HEK293T (cell line): ENCODE measurements at regions of chr3 and their contacts with region 1.

Region 1: DNA sequence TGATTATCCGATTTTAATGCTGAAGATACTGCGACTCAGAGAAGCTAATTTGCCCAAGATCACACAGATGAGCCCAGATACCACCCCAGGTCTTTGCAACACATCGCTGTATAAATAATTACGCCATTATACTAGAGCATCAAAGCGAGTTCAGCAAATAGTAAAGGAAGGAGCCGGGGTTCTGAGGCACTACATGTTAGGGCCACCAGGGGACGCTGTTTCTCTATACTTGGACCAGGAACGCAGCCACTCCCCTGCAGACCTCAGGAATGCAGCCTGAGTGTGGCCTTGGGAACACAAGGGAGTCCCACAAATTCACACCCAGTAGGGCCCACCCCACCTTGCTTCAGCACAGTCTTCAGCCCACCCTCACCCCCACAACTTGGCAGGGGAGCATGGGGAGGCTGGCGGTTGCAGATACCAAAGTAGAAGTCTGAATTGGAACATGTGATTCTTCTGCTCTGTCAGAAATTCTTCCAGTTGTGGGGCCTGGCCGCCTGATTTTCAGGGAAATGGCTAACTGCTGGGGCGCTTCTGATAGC is 57.8 kb upstream of the RYK start:
- DNase-seq: peak; percentile 79

Region 2: GRCh38 chr3:134279471-134279870 is 28.9 kb before region 1 on chr3:
- CTCF ChIA-PET with region 1: no interaction called
- POLR2A ChIA-PET with region 1: no interaction called
- DNase-seq: no peak

Region 3: DNA sequence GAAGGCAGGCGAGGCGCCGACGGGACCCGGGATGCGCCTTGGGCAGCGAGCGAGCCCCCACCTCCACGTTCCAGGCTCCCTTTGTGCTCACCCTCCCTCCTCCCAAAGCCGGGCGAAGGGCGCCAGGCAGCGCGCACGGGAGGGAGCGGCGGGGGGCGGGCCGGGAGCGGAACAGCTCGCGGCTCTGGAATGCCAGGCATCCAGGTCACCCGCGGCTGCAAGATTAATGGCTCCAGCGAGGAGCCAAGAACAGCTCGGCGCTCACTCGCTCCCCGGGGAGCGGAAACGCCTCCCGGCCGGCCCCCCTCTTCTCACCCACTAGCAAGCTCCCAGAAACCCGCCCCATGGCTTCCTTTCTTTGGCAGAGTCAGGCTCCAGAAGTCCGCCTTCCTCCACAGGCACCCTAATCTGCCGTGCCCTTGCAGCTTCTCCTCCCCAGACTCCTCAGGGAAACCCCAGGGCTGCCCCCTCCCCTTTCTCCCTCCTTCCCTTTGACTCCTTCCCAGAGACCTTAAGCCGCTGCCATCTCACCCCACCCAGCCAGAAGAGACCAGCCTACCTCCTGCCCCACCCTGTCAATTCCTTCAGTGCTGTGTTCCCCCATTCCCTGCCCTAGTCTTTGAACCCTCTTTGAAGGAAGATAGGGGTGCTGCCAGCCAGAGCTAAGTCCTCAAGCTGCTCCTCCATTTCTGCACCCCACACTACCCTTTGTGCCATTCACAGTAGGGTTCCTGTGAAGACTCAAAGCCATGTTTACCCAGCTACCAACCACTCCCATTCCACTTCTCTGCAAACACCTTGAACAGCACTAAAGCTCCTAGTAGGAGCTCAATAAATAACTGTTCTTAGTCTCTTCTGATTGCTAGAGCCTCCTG is 55.9 kb after region 1 on chr3:
- CTCF ChIA-PET with region 1: interaction called, 13 read pairs
- POLR2A ChIA-PET with region 1: no interaction called
- DNase-seq: peak; percentile 69

Region 4: DNA sequence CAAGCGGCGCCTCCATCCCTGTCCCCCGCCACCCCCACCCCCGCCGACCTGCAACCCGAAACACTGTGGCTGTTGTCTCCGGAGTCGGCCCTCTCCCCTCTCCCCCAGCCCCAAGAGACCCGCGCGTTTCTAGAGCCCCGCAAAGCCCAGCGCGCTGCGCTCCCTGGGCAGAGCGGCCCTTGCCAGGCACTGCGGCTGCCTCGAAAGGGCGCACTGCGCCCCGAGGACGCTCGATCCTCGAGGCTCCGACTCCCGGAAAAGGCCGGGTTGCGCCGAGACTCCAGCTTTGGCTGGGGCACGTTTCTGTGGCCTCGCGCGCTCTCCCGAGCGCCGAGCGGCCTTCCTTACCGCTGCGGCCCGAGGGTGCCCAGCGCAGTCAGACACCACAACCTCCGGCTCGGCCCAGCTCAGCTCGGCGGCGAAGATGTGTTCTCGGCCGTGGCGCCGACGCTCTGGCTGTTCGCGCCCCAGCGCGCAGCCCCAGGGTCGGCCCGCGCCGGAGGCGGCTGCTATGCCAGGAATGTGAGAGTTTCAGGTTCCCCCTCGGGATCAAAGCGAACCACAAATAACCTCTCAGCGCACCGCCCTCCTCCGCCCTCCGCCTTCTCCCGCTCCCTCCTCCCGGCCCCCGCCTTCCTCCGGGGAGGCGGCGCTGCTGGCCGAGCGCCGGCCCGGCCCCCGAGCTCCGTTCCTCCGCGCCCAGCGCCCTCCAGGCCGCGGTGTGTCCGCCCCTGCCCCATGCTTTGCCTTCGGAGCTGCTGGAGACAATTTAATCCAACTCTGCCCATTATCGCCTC is 65.8 kb after region 1 on chr3 and contains the start of gene AMOTL2:
- CTCF ChIA-PET with region 1: interaction called, 12 read pairs
- POLR2A ChIA-PET with region 1: interaction called, 3 read pairs
- DNase-seq: peak; percentile 91

Region 5: GRCh38 chr3:134473868-134474546 is 165.6 kb after region 1 on chr3:
- CTCF ChIA-PET with region 1: interaction called, 26 read pairs
- POLR2A ChIA-PET with region 1: no interaction called
- DNase-seq: peak; percentile 52

Region 6: DNA sequence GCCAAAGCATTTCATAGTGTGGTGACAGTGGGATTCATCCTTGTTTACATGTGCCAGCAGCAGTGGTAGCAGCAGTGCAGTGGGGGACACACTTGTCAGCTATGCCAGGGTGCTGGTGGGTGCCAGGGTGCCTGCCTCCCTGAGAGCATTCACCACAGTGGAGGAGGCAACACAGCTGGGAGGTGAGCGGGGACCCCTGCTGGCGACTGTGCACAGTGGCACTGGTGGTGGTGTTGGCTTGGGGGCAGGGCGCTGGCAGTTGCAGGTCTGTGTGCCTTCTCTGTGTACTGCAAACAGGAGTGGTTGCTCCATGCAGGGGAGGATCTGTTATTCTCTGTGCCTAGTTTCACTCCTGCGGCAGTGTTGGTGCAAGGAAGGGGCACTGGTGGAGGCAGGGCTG is 218.6 kb after region 1 on chr3:
- CTCF ChIA-PET with region 1: no interaction called
- POLR2A ChIA-PET with region 1: no interaction called
- DNase-seq: peak; percentile 10